Activated CD8-positive, alpha-beta T cell treated with anti-CD3 and anti-CD28 coated beads for 36 hours (primary cell): ENCODE measurements at regions of chr9 and their contacts with region 1.

Region 1: GRCh38 chr9:84315278-84315877 is 25.2 kb downstream of the SLC28A3 start:
- DNase-seq: peak; percentile 72
- ATAC-seq: peak; percentile 70
- H3K4me3 Mint-ChIP-seq: no peak overlapping the region
- H3K27ac Mint-ChIP-seq: no peak overlapping the region
- H3K4me1 Mint-ChIP-seq: peaks cover 9% of the 10 kb centered on the region
- H3K27me3 Mint-ChIP-seq: peaks cover 5% of the 10 kb centered on the region
- CTCF ChIP-seq: peak; percentile 89

Region 2: GRCh38 chr9:83937911-83938323 is 377.5 kb before region 1 on chr9:
- CTCF ChIA-PET with region 1: interaction called, 9 read pairs
- POLR2A ChIA-PET with region 1: no interaction called
- intact Hi-C with region 1: loop called (anchors 2 kb)
- DNase-seq: peak; percentile 25
- ATAC-seq: peak; percentile 58
- H3K4me3 Mint-ChIP-seq: no peak overlapping the region
- H3K27ac Mint-ChIP-seq: no peak overlapping the region
- H3K4me1 Mint-ChIP-seq: no peaks in the 10 kb centered on the region
- H3K27me3 Mint-ChIP-seq: no peaks in the 10 kb centered on the region
- CTCF ChIP-seq: peak; percentile 83